ENCODE measurements at regions of chr4 and their contacts with region 1.

Region 1: GRCh38 chr4:152735396-152735859 is 44.1 kb downstream of the TIGD4 start:
- DNase-seq: no peak
- H3K4me3 ChIP-seq: no peak overlapping the region
- H3K27ac ChIP-seq: no peak overlapping the region
- H3K4me1 ChIP-seq: peaks cover 0 to 20% (median 5%) of the 10 kb centered on the region in 6 donors
- H3K27me3 ChIP-seq: no peaks in the 10 kb centered on the region
- CTCF ChIP-seq: peak; percentile 35 to 74 (median 64)
- POLR2A ChIP-seq: no peak

Region 2: GRCh38 chr4:152352622-152353116 is 382.8 kb before region 1 on chr4:
- intact Hi-C with region 1: no loop called
- DNase-seq: peak; percentile 69
- H3K4me3 ChIP-seq: peak overlapping the region; percentile 13 to 67 (median 30)
- H3K27ac ChIP-seq: peak overlapping the region; percentile 23 to 82 (median 74)
- H3K4me1 ChIP-seq: peaks cover 0 to 64% (median 11%) of the 10 kb centered on the region in 6 donors
- H3K27me3 ChIP-seq: no peaks in the 10 kb centered on the region
- CTCF ChIP-seq: no peak
- POLR2A ChIP-seq: peak in 1 of 3 donors; percentile 90

Region 3: GRCh38 chr4:152640058-152640833 is 95.2 kb before region 1 on chr4:
- intact Hi-C with region 1: loop called (anchors 10 kb)
- DNase-seq: no peak
- H3K4me3 ChIP-seq: no peak overlapping the region
- H3K27ac ChIP-seq: peak overlapping the region in 4 of 8 donors; percentile 2 to 92 (median 22)
- H3K4me1 ChIP-seq: peaks cover 9 to 85% (median 40%) of the 10 kb centered on the region in 6 donors
- H3K27me3 ChIP-seq: no peaks in the 10 kb centered on the region
- CTCF ChIP-seq: peak in 9 of 11 experiments; percentile 20 to 66 (median 54)
- POLR2A ChIP-seq: no peak

Region 4: GRCh38 chr4:152996108-152996571 is 260.7 kb after region 1 on chr4:
- intact Hi-C with region 1: no loop called
- DNase-seq: no peak
- H3K4me3 ChIP-seq: no peak overlapping the region
- H3K27ac ChIP-seq: peak overlapping the region; percentile 35 to 78 (median 69)
- H3K4me1 ChIP-seq: peaks cover 0 to 31% (median 15%) of the 10 kb centered on the region in 6 donors
- H3K27me3 ChIP-seq: no peaks in the 10 kb centered on the region
- CTCF ChIP-seq: no peak
- POLR2A ChIP-seq: no peak

Measured in spleen (tissue), 13 donors.